ENCODE measurements at regions of chr12 and their contacts with region 1.

Region 1: GRCh38 chr12:33093643-33094042 is 197.1 kb upstream of the PKP2 start:
- DNase-seq: no peak
- ATAC-seq: no peak
- H3K4me3 ChIP-seq: no peak overlapping the region
- H3K27ac ChIP-seq: no peak overlapping the region
- H3K4me1 ChIP-seq: no peaks in the 10 kb centered on the region
- H3K27me3 ChIP-seq: no peaks in the 10 kb centered on the region
- CTCF ChIP-seq: no peak
- POLR2A ChIP-seq: no peak

Region 2: GRCh38 chr12:33044447-33044846 is 49.2 kb before region 1 on chr12:
- in situ Hi-C with region 1: no loop called
- intact Hi-C with region 1: no loop called
- DNase-seq: no peak
- ATAC-seq: no peak
- H3K4me3 ChIP-seq: no peak overlapping the region
- H3K27ac ChIP-seq: no peak overlapping the region
- H3K4me1 ChIP-seq: no peaks in the 10 kb centered on the region
- H3K27me3 ChIP-seq: no peaks in the 10 kb centered on the region
- CTCF ChIP-seq: no peak
- POLR2A ChIP-seq: no peak

Region 3: DNA sequence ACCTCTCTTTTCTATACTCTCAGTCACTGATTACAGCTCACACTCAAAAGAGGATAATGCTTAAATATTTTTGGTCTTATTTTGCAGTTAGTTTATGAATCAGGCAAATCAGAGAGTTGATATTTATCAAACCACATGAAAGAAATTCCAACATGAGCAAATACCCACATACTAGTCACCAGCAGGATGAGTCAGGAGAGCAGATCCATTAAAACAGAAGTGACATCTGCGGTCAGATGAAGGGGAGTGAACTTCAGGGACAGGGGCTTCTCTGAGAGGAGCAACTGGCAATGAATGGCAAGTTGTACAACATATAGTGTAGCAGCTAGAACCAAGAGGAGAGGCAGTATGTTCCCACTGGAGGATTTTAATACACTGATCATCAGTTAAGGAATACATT is 87.3 kb after region 1 on chr12:
- in situ Hi-C with region 1: loop called in 1 of 4 experiments (anchors 25 kb)
- intact Hi-C with region 1: no loop called
- DNase-seq: no peak
- ATAC-seq: no peak
- H3K4me3 ChIP-seq: no peak overlapping the region
- H3K27ac ChIP-seq: no peak overlapping the region
- H3K4me1 ChIP-seq: no peaks in the 10 kb centered on the region
- H3K27me3 ChIP-seq: no peaks in the 10 kb centered on the region
- CTCF ChIP-seq: no peak
- POLR2A ChIP-seq: no peak